H1 (cell line): ENCODE measurements at regions of chr6 and their contacts with region 1.

Region 1: GRCh38 chr6:92122746-92123145 is 1296.6 kb downstream of the EPHA7 start:
- DNase-seq: no peak
- H3K4me3 ChIP-seq: no peak overlapping the region
- H3K27ac ChIP-seq: no peak overlapping the region
- H3K4me1 ChIP-seq: peaks cover 0 to 7% (median 1%) of the 10 kb centered on the region in 4 experiments; a peak in 2 of 7 replicates
- H3K27me3 ChIP-seq: peaks cover 0 to 1% (median 0%) of the 10 kb centered on the region in 4 experiments; a peak in 1 of 7 replicates
- CTCF ChIP-seq: peak in 2 of 3 experiments; percentile 17 to 28; a peak in 2 of 4 replicates
- EP300 ChIP-seq: no peak
- POLR2A ChIP-seq: no peak
- RAD21 ChIP-seq: peak; percentile 52 to 59

Region 2: DNA sequence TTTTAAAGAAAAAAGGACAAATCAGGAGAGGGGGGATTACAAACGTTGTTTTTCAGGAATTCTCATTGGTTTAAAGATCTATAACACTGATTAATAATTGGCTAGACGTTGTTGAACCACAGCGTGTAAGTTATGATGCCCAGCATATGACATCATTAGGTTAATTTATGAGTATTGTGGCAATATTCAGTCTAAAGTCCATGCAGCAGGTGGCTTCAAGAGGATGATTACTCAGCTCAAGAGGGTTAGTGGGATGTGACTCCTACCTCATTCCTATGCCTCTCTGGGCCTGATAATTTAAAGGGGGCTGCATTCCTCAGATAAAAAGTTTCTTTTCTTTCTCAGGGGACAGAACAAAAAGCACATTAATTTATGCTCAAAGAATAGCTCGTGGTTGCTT is 12.3 kb before region 1 on chr6:
- CTCF ChIA-PET with region 1: interaction called, 10 read pairs
- POLR2A ChIA-PET with region 1: no interaction called
- DNase-seq: no peak
- H3K4me3 ChIP-seq: no peak overlapping the region
- H3K27ac ChIP-seq: no peak overlapping the region
- H3K4me1 ChIP-seq: no peaks in the 10 kb centered on the region
- H3K27me3 ChIP-seq: no peaks in the 10 kb centered on the region
- CTCF ChIP-seq: no peak
- EP300 ChIP-seq: no peak
- POLR2A ChIP-seq: no peak
- RAD21 ChIP-seq: no peak

Region 3: DNA sequence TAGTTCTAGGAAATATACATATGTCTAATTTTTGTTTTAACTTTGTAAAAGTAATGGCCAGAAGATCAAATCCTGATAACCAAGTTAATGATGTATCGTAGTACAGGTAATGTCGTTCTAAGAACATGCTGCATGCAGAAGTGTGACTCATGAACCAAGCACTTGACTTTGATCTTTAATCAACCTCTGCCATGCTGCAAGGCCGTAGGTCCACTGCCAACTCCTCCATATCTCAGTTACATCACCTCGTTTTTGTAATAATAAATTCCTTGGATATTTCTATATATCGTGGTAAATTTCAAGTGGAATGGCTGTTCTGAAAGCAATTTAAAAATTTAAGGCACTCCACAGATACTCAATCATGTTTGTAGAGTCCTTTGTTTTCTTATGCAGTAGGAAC is 524.9 kb after region 1 on chr6:
- CTCF ChIA-PET with region 1: interaction called, 12 read pairs
- POLR2A ChIA-PET with region 1: no interaction called
- DNase-seq: no peak
- H3K4me3 ChIP-seq: no peak overlapping the region
- H3K27ac ChIP-seq: no peak overlapping the region
- H3K4me1 ChIP-seq: no peaks in the 10 kb centered on the region
- H3K27me3 ChIP-seq: no peaks in the 10 kb centered on the region
- CTCF ChIP-seq: no peak
- EP300 ChIP-seq: no peak
- POLR2A ChIP-seq: no peak
- RAD21 ChIP-seq: no peak